Endothelial cell of umbilical vein (primary cell): ENCODE measurements at regions of chr1 and their contacts with region 1.

Region 1: GRCh38 chr1:36149237-36149972 is at the start of gene TRAPPC3:
- DNase-seq: peak; percentile 100
- H3K4me3 ChIP-seq: peak within 1 kb of the TSS; percentile 46 to 84 (median 71)
- H3K27ac ChIP-seq: peak within 1 kb of the TSS; percentile 98
- H3K4me1 ChIP-seq: peaks cover 31% of the 10 kb centered on the region
- H3K27me3 ChIP-seq: no peaks in the 10 kb centered on the region
- CTCF ChIP-seq: peak; percentile 99
- POLR2A ChIP-seq: peak; percentile 89
- total RNA-seq, gene TRAPPC3: 87.7 and 93.4 TPM in 2 replicates

Region 2: GRCh38 chr1:34779526-34779925 is 1369.9 kb before region 1 on chr1:
- CTCF ChIA-PET with region 1: no interaction called
- POLR2A ChIA-PET with region 1: no interaction called
- dilution Hi-C with region 1: no loop called
- intact Hi-C with region 1: no loop called
- DNase-seq: no peak
- H3K4me3 ChIP-seq: no peak overlapping the region
- H3K27ac ChIP-seq: no peak overlapping the region
- H3K4me1 ChIP-seq: no peaks in the 10 kb centered on the region
- H3K27me3 ChIP-seq: peaks cover 27 to 33% of the 10 kb centered on the region in 2 experiments
- CTCF ChIP-seq: no peak
- POLR2A ChIP-seq: no peak

Region 3: GRCh38 chr1:35947547-35947946 is 201.9 kb before region 1 on chr1:
- CTCF ChIA-PET with region 1: no interaction called
- POLR2A ChIA-PET with region 1: no interaction called
- dilution Hi-C with region 1: no loop called
- intact Hi-C with region 1: no loop called
- DNase-seq: no peak
- H3K4me3 ChIP-seq: no peak overlapping the region
- H3K27ac ChIP-seq: no peak overlapping the region
- H3K4me1 ChIP-seq: peaks cover 8% of the 10 kb centered on the region
- H3K27me3 ChIP-seq: no peaks in the 10 kb centered on the region
- CTCF ChIP-seq: no peak
- POLR2A ChIP-seq: no peak

Region 4: DNA sequence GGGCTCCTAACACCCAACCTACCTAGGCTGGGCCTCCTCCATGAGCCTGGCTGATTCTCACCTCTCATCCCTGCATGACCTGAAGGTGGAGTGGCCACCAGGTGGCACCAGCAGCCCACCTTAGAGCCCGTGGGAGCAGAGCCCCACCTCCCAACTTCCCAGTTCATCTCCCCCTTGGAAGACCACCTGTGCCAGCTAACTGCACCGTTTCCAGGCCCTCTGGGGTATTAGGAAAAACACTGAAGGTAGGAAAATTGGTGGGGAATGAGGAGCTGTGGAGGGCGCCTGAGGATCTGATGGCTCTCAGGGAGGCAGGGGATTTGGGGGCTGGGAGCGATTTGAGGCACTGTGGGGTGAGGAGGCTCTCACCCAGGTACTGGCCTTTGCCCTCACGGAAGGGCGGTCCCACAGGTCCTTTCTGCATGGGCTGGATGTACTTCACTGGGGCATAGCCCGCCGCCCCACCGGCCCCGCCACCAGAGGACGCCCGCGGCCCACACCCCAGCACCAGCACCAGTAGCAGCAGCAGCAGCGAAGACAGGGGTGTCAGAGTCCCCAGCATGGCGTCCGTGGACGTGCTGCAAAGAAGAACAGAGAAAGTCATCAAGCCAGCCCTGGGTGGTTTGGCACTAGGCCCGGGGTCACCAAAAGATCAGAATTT is 49.6 kb before region 1 on chr1:
- CTCF ChIA-PET with region 1: interaction called, 13 read pairs
- POLR2A ChIA-PET with region 1: no interaction called
- dilution Hi-C with region 1: no loop called
- intact Hi-C with region 1: loop called (anchors 1 kb)
- DNase-seq: peak; percentile 65
- H3K4me3 ChIP-seq: no peak overlapping the region
- H3K27ac ChIP-seq: no peak overlapping the region
- H3K4me1 ChIP-seq: no peaks in the 10 kb centered on the region
- H3K27me3 ChIP-seq: no peaks in the 10 kb centered on the region
- CTCF ChIP-seq: peak; percentile 84
- POLR2A ChIP-seq: no peak

Region 5: GRCh38 chr1:36115931-36116330 is 33.5 kb before region 1 on chr1:
- CTCF ChIA-PET with region 1: no interaction called
- POLR2A ChIA-PET with region 1: no interaction called
- dilution Hi-C with region 1: no loop called
- intact Hi-C with region 1: no loop called
- DNase-seq: no peak
- H3K4me3 ChIP-seq: no peak overlapping the region
- H3K27ac ChIP-seq: no peak overlapping the region
- H3K4me1 ChIP-seq: no peaks in the 10 kb centered on the region
- H3K27me3 ChIP-seq: no peaks in the 10 kb centered on the region
- CTCF ChIP-seq: no peak
- POLR2A ChIP-seq: no peak

Region 6: GRCh38 chr1:36172983-36173382 is 23.6 kb after region 1 on chr1:
- CTCF ChIA-PET with region 1: interaction called, 23 read pairs
- POLR2A ChIA-PET with region 1: interaction called, 7 read pairs
- dilution Hi-C with region 1: no loop called
- intact Hi-C with region 1: loop called (anchors 1 kb)
- DNase-seq: peak; percentile 49
- H3K4me3 ChIP-seq: no peak overlapping the region
- H3K27ac ChIP-seq: peak overlapping the region; percentile 56
- H3K4me1 ChIP-seq: peaks cover 19% of the 10 kb centered on the region
- H3K27me3 ChIP-seq: no peaks in the 10 kb centered on the region
- CTCF ChIP-seq: no peak
- POLR2A ChIP-seq: no peak

Region 7: DNA sequence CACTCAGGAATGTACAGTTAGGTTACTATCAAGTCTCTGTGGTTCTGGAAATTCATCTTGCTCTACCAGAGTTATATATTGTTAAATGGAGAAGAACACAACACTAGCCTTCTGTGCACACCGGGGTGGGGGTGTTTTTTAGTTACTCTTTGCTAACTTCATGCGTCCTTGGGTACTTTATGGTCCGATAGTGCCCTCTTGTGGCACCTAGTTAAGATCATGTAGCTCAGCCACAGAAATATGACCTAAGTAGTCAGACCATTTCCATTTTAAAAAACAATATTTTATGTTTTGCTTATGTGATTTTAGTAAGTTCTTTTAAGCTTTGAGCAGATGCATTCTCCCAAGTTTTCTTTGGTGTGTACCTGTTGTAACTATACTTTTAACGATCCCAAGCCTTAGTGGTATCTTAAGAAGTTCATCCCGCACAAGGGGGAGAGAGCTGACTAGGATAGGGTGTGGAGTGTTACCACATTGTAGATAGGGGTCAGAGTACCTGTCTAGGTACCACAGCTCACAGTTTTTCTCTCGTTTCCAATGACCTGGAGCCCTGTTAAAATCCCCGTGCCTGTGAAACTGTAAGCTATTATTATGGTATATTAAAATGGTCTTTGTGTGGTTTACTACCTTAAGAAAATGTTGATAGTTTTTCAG is 136.2 kb after region 1 on chr1:
- CTCF ChIA-PET with region 1: interaction called, 81 read pairs
- POLR2A ChIA-PET with region 1: no interaction called
- dilution Hi-C with region 1: no loop called
- intact Hi-C with region 1: loop called (anchors 1 kb)
- DNase-seq: peak; percentile 79
- H3K4me3 ChIP-seq: no peak overlapping the region
- H3K27ac ChIP-seq: no peak overlapping the region
- H3K4me1 ChIP-seq: no peaks in the 10 kb centered on the region
- H3K27me3 ChIP-seq: no peaks in the 10 kb centered on the region
- CTCF ChIP-seq: peak; percentile 57 to 59
- POLR2A ChIP-seq: no peak

Region 8: GRCh38 chr1:36342481-36343478 is 193.4 kb after region 1 on chr1:
- CTCF ChIA-PET with region 1: interaction called, 9 read pairs
- POLR2A ChIA-PET with region 1: no interaction called
- dilution Hi-C with region 1: no loop called
- intact Hi-C with region 1: loop called (anchors 1 kb)
- DNase-seq: peak; percentile 95
- H3K4me3 ChIP-seq: no peak overlapping the region
- H3K27ac ChIP-seq: peak overlapping the region; percentile 85
- H3K4me1 ChIP-seq: peaks cover 28% of the 10 kb centered on the region
- H3K27me3 ChIP-seq: no peaks in the 10 kb centered on the region
- CTCF ChIP-seq: peak; percentile 88 to 89
- POLR2A ChIP-seq: peak; percentile 49

Region 9: DNA sequence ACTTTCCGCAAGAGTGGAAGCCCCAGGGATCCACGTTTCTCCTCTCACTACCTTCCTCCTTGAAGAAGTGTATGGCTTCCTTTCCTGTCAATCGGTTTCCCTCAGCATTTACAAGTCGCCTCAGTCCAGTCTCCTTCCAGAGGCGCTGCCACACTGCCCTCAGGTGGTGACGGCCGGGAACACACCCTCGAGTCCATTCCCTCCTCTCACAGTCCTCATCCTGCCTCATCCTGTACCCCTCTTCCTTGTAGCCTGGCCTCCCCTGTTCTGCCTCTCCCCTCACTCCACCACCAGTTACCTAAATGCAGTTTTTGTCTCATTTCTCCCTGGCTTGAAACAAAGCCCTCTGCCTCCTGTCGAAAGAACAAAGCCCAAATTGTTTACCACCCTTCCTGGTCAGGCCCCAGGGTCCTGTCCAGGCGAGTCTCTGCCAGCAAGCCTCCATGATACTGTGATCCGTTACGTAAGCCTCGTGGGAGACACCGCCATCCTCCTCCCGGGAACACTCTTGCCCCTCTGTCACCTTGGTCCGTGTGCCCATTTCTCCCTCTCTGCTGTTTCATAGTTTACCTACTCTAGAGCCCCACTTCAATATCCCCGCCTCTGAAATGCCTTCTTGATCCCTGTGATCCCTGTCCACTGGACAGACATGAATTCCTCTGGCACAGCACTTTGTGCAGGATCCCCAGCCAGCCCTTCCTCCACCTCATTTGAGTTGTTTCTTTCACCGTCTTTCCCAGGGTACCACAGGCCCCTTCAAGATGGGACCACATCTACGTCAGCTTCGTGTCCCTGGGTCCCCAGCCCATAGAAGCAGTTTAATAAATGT is 271.6 kb after region 1 on chr1:
- CTCF ChIA-PET with region 1: interaction called, 3 read pairs
- POLR2A ChIA-PET with region 1: no interaction called
- dilution Hi-C with region 1: no loop called
- intact Hi-C with region 1: loop called (anchors 1 kb)
- DNase-seq: peak; percentile 90
- H3K4me3 ChIP-seq: no peak overlapping the region
- H3K27ac ChIP-seq: no peak overlapping the region
- H3K4me1 ChIP-seq: peaks cover 3% of the 10 kb centered on the region
- H3K27me3 ChIP-seq: no peaks in the 10 kb centered on the region
- CTCF ChIP-seq: peak; percentile 96 to 97
- POLR2A ChIP-seq: no peak